Naive thymus-derived CD4-positive, alpha-beta T cell (primary cell): ENCODE measurements at regions of chrX and their contacts with region 1.

Region 1: DNA sequence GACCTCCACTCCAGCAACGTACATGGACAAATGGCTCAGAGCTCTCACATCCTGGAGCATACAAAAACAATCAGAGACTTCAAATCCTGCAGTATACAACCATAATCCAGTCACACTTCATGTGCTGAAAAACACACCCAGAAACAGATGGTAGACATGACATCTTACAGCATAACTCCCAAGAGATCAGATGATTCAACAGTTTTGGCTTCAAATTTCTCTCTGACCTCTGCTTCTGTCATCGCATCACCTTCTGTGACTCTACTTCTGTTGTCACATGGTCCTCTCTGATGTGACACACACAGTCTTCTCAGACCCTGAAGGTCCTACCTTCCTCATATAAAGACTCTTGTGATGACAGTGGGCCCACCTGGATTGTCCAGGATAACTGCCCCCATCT is 18.5 kb downstream of the SUV39H1 start:
- DNase-seq: no peak
- ATAC-seq: no peak
- H3K4me3 ChIP-seq: no peak overlapping the region
- H3K4me3 Mint-ChIP-seq: peak overlapping the region in 8 of 10 donors; percentile 14 to 96 (median 76)
- H3K27ac ChIP-seq: peak overlapping the region; percentile 49
- H3K27ac Mint-ChIP-seq: peak overlapping the region; percentile 6 to 97 (median 90)
- H3K4me1 ChIP-seq: peaks cover 63 to 69% of the 10 kb centered on the region in 2 donors
- H3K4me1 Mint-ChIP-seq: peaks cover 65 to 84% (median 82%) of the 10 kb centered on the region in 7 donors
- H3K27me3 ChIP-seq: no peaks in the 10 kb centered on the region
- H3K27me3 Mint-ChIP-seq: peaks cover 0 to 2% (median 0%) of the 10 kb centered on the region in 5 donors

Region 2: GRCh38 chrX:48606091-48606490 is 109.0 kb before region 1 on chrX:
- CTCF ChIA-PET with region 1: no interaction called
- POLR2A ChIA-PET with region 1: no interaction called
- intact Hi-C with region 1: no loop called
- DNase-seq: no peak
- ATAC-seq: no peak
- H3K4me3 ChIP-seq: no peak overlapping the region
- H3K4me3 Mint-ChIP-seq: no peak overlapping the region
- H3K27ac ChIP-seq: no peak overlapping the region
- H3K27ac Mint-ChIP-seq: no peak overlapping the region
- H3K4me1 ChIP-seq: no peaks in the 10 kb centered on the region
- H3K4me1 Mint-ChIP-seq: no peaks in the 10 kb centered on the region
- H3K27me3 ChIP-seq: no peaks in the 10 kb centered on the region
- H3K27me3 Mint-ChIP-seq: no peaks in the 10 kb centered on the region

Region 3: DNA sequence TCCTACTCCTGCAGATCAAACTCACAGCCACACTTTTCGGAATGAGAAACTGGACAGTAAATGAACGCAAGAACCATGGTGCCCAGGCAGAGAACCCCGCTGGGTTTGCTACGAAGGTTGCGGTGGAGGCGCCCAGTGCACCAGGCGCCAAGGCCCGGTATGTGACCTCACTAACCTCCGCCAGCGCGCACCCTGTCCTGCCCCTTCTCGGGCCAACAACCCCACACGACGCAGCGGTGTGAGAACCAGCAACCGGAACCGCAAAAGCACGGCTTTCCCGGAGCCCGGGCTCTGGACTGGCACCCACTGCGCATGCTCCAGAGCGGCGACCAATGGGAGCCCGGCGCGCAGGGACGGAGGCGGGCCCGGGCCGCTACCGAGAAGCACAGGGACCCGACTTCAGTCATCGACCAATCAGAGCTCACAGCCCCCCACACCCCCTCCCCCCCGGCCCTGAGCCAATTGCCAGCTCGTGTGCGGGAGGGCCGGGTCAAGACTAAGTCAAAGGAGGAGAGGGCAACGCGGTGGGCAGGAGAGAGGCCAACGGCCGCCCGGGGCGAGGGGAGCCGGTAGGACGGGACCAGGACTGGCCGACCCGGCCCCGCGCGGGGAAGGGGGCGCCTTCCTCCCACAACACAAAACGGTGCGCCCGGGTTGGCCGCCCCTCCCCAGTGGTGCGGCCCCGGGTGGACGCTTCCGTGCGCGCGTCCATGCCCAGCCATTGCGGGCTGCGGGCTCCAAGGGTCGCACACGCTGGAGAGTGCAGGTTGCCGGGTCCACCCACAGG is 38.8 kb before region 1 on chrX:
- CTCF ChIA-PET with region 1: no interaction called
- POLR2A ChIA-PET with region 1: interaction called, 6 read pairs
- intact Hi-C with region 1: loop called in 1 of 2 experiments (anchors 1 kb)
- DNase-seq: peak; percentile 74 to 89 (median 88)
- ATAC-seq: peak; percentile 98
- H3K4me3 ChIP-seq: peak overlapping the region; percentile 77
- H3K4me3 Mint-ChIP-seq: peak overlapping the region; percentile 88 to 94 (median 92)
- H3K27ac ChIP-seq: peak overlapping the region; percentile 90
- H3K27ac Mint-ChIP-seq: peak overlapping the region; percentile 82 to 95 (median 90)
- H3K4me1 ChIP-seq: no peaks in the 10 kb centered on the region
- H3K4me1 Mint-ChIP-seq: peaks cover 6 to 26% (median 22%) of the 10 kb centered on the region in 7 donors
- H3K27me3 ChIP-seq: no peaks in the 10 kb centered on the region
- H3K27me3 Mint-ChIP-seq: no peaks in the 10 kb centered on the region

Region 4: GRCh38 chrX:48683411-48683982 is 31.6 kb before region 1 on chrX and contains the start of gene WAS:
- CTCF ChIA-PET with region 1: no interaction called
- POLR2A ChIA-PET with region 1: interaction called, 11 read pairs
- intact Hi-C with region 1: no loop called
- DNase-seq: peak in 8 of 9 donors; percentile 35 to 63 (median 54)
- ATAC-seq: peak; percentile 85
- H3K4me3 ChIP-seq: peak within 1 kb of the TSS; percentile 82
- H3K4me3 Mint-ChIP-seq: peak within 1 kb of the TSS; percentile 84 to 98 (median 91)
- H3K27ac ChIP-seq: peak within 1 kb of the TSS; percentile 76
- H3K27ac Mint-ChIP-seq: peak within 1 kb of the TSS; percentile 87 to 97 (median 95)
- H3K4me1 ChIP-seq: peaks cover 25 to 36% of the 10 kb centered on the region in 2 donors
- H3K4me1 Mint-ChIP-seq: peaks cover 33 to 69% (median 54%) of the 10 kb centered on the region in 7 donors
- H3K27me3 ChIP-seq: no peaks in the 10 kb centered on the region
- H3K27me3 Mint-ChIP-seq: no peaks in the 10 kb centered on the region
- total RNA-seq, gene WAS: 92.2 to 164 (median 105) TPM

Region 5: DNA sequence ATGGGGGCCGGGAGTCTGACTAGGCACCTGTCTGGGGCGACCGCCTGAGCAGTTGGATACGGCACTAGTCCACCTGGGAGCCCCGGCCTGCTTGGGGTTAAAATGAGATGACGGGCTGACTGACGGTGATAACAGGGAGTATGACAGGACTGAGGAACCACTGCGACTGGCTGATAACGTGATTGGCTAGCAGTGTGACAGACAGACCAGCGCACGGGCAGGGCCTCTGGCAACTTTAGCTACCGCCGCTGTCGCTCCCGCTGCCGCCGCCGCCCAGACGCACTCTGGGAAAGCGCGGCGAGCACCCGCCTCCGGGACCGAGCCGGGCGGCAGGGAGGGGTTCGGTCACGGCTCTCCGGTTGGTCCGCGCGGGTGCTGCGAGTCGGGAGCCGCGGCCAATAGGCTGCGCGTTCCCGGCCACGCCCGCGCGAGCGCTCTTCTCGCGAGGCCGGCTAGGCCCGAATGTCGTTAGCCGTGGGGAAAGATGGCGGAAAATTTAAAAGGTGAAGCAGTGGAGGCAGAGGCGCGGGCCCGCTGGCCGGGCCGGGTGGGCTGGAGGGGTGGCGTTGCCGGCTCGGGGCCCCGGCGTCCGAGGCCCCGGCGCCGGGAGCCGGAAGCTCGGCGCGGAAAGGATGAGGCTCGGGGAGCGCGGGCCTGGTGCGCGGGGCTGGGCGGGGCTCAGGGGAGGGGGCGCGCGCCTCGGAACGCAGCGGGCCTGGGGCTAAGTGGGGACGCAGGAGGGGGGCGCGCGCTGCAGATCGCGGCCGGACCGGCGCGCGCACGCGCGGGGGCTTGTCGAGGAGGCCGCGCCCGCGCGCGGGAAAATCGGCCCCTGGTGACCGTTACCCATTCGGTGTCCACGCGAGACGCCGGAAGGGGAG is 18.5 kb before region 1 on chrX and contains the start of gene SUV39H1:
- CTCF ChIA-PET with region 1: no interaction called
- POLR2A ChIA-PET with region 1: interaction called, 23 read pairs
- intact Hi-C with region 1: loop called (anchors 1 kb)
- DNase-seq: peak; percentile 76 to 90 (median 85)
- ATAC-seq: peak; percentile 97
- H3K4me3 ChIP-seq: peak within 1 kb of the TSS; percentile 62
- H3K4me3 Mint-ChIP-seq: peak within 1 kb of the TSS; percentile 86 to 95 (median 90)
- H3K27ac ChIP-seq: peak within 1 kb of the TSS; percentile 82
- H3K27ac Mint-ChIP-seq: peak within 1 kb of the TSS; percentile 91 to 96 (median 95)
- H3K4me1 ChIP-seq: peaks cover 0 to 13% of the 10 kb centered on the region in 2 donors
- H3K4me1 Mint-ChIP-seq: peaks cover 6 to 39% (median 28%) of the 10 kb centered on the region in 7 donors
- H3K27me3 ChIP-seq: no peaks in the 10 kb centered on the region
- H3K27me3 Mint-ChIP-seq: no peaks in the 10 kb centered on the region
- total RNA-seq, gene SUV39H1: 4.6 to 23.3 (median 8.6) TPM

Region 6: GRCh38 chrX:48911412-48912182 is 196.5 kb after region 1 on chrX and contains the start of gene SLC35A2:
- CTCF ChIA-PET with region 1: no interaction called
- POLR2A ChIA-PET with region 1: interaction called, 4 read pairs
- intact Hi-C with region 1: loop called in 1 of 2 experiments (anchors 5 kb)
- DNase-seq: peak; percentile 75 to 92 (median 90)
- ATAC-seq: peak; percentile 78
- H3K4me3 ChIP-seq: peak within 1 kb of the TSS; percentile 77
- H3K4me3 Mint-ChIP-seq: peak within 1 kb of the TSS; percentile 86 to 96 (median 90)
- H3K27ac ChIP-seq: peak within 1 kb of the TSS; percentile 76
- H3K27ac Mint-ChIP-seq: peak within 1 kb of the TSS; percentile 86 to 98 (median 96)
- H3K4me1 ChIP-seq: peaks cover 32 to 42% of the 10 kb centered on the region in 2 donors
- H3K4me1 Mint-ChIP-seq: peaks cover 20 to 61% (median 42%) of the 10 kb centered on the region in 7 donors
- H3K27me3 ChIP-seq: no peaks in the 10 kb centered on the region
- H3K27me3 Mint-ChIP-seq: peaks cover 0 to 3% (median 0%) of the 10 kb centered on the region in 5 donors
- total RNA-seq, gene SLC35A2: 13.9 to 36.7 (median 18.5) TPM

Region 7: GRCh38 chrX:48937054-48937907 is 222.2 kb after region 1 on chrX:
- CTCF ChIA-PET with region 1: no interaction called
- POLR2A ChIA-PET with region 1: no interaction called
- intact Hi-C with region 1: loop called in 1 of 2 experiments (anchors 1 kb)
- DNase-seq: peak; percentile 59 to 96 (median 92)
- ATAC-seq: peak; percentile 75
- H3K4me3 ChIP-seq: peak overlapping the region; percentile 70
- H3K4me3 Mint-ChIP-seq: peak overlapping the region; percentile 78 to 96 (median 88)
- H3K27ac ChIP-seq: peak overlapping the region; percentile 97
- H3K27ac Mint-ChIP-seq: peak overlapping the region; percentile 96 to 99 (median 99)
- H3K4me1 ChIP-seq: peaks cover 69 to 80% of the 10 kb centered on the region in 2 donors
- H3K4me1 Mint-ChIP-seq: peaks cover 36 to 91% (median 80%) of the 10 kb centered on the region in 7 donors
- H3K27me3 ChIP-seq: no peaks in the 10 kb centered on the region
- H3K27me3 Mint-ChIP-seq: peaks cover 0 to 3% (median 0%) of the 10 kb centered on the region in 5 donors